Activated CD4-positive, alpha-beta memory T cell treated with anti-CD3 and anti-CD28 coated beads for 36 hours (primary cell): ENCODE measurements at regions of chr9 and their contacts with region 1.

Region 1: DNA sequence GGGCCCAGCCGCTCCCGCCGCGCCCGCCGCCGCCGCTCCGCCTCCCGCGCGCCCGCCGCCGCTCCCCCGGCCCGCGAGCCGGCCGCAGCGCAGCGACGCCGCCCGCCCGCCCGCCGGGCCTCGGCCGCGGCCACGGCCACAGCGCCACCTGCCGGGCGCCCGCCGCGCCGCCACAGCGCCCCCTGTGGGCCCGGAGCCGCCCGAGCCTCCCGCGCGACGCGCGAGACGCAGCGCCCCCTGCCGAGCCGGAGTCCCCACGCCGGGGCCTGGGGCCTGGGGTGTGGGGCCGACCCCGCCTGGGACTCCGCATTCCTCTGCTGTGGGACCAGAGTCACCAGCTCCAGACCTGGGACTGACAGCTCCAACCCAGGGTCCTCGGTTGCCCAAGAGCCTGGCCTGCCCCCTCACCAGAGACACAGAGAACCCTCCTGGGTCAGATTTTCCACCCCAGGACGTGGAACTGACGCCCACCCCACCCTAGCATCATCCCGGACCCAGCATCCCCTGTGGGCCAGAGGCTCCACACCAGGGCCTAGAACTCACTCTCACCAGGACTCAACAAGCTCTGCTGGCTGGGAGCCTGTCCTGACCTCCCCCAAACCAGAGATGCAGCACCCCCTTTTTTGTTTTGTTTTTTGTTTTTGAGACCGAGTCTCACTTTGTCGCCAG is at the start of gene RAPGEF1:
- DNase-seq: peak; percentile 86
- H3K4me3 Mint-ChIP-seq: peak within 1 kb of the TSS; percentile 91
- H3K27ac Mint-ChIP-seq: peak within 1 kb of the TSS; percentile 90
- H3K4me1 Mint-ChIP-seq: peaks cover 49% of the 10 kb centered on the region
- H3K27me3 Mint-ChIP-seq: no peaks in the 10 kb centered on the region
- total RNA-seq, gene RAPGEF1: 91.9 to 92.3 TPM

Region 2: GRCh38 chr9:131349881-131350563 is 390.1 kb before region 1 on chr9:
- CTCF ChIA-PET with region 1: interaction called, 10 read pairs
- POLR2A ChIA-PET with region 1: no interaction called
- intact Hi-C with region 1: no loop called
- DNase-seq: peak; percentile 92
- H3K4me3 Mint-ChIP-seq: no peak overlapping the region
- H3K27ac Mint-ChIP-seq: no peak overlapping the region
- H3K4me1 Mint-ChIP-seq: peaks cover 5% of the 10 kb centered on the region
- H3K27me3 Mint-ChIP-seq: no peaks in the 10 kb centered on the region

Region 3: GRCh38 chr9:131382850-131383729 is 357.0 kb before region 1 on chr9:
- CTCF ChIA-PET with region 1: no interaction called
- POLR2A ChIA-PET with region 1: no interaction called
- intact Hi-C with region 1: no loop called
- DNase-seq: no peak
- H3K4me3 Mint-ChIP-seq: no peak overlapping the region
- H3K27ac Mint-ChIP-seq: peak overlapping the region; percentile 10
- H3K4me1 Mint-ChIP-seq: peaks cover 4% of the 10 kb centered on the region
- H3K27me3 Mint-ChIP-seq: no peaks in the 10 kb centered on the region

Region 4: GRCh38 chr9:131590908-131591844 is 148.9 kb before region 1 on chr9:
- CTCF ChIA-PET with region 1: interaction called, 65 read pairs
- POLR2A ChIA-PET with region 1: interaction called, 4 read pairs
- intact Hi-C with region 1: loop called (anchors 1 kb)
- DNase-seq: peak; percentile 87
- H3K4me3 Mint-ChIP-seq: no peak overlapping the region
- H3K27ac Mint-ChIP-seq: peak overlapping the region; percentile 72
- H3K4me1 Mint-ChIP-seq: peaks cover 27% of the 10 kb centered on the region
- H3K27me3 Mint-ChIP-seq: no peaks in the 10 kb centered on the region

Region 5: GRCh38 chr9:131635285-131635684 is 104.8 kb before region 1 on chr9:
- CTCF ChIA-PET with region 1: interaction called, 20 read pairs
- POLR2A ChIA-PET with region 1: interaction called, 4 read pairs
- intact Hi-C with region 1: no loop called
- DNase-seq: peak; percentile 90
- H3K4me3 Mint-ChIP-seq: peak overlapping the region; percentile 12
- H3K27ac Mint-ChIP-seq: peak overlapping the region; percentile 93
- H3K4me1 Mint-ChIP-seq: peaks cover 68% of the 10 kb centered on the region
- H3K27me3 Mint-ChIP-seq: no peaks in the 10 kb centered on the region

Region 6: GRCh38 chr9:131678499-131679111 is 61.5 kb before region 1 on chr9:
- CTCF ChIA-PET with region 1: interaction called, 60 read pairs
- POLR2A ChIA-PET with region 1: interaction called, 22 read pairs
- intact Hi-C with region 1: no loop called
- DNase-seq: peak; percentile 92
- H3K4me3 Mint-ChIP-seq: peak overlapping the region; percentile 83
- H3K27ac Mint-ChIP-seq: peak overlapping the region; percentile 99
- H3K4me1 Mint-ChIP-seq: peaks cover 92% of the 10 kb centered on the region
- H3K27me3 Mint-ChIP-seq: no peaks in the 10 kb centered on the region